ENCODE measurements at regions of chr7 and their contacts with region 1.

Region 1: GRCh38 chr7:142880876-142881505 is 4.6 kb downstream of the TRPV6 start:
- DNase-seq: peak in 1 of 2 experiments; percentile 46
- H3K4me3 ChIP-seq: no peak overlapping the region
- H3K27ac ChIP-seq: no peak overlapping the region
- H3K4me1 ChIP-seq: peaks cover 33% of the 10 kb centered on the region
- H3K27me3 ChIP-seq: no peaks in the 10 kb centered on the region
- CTCF ChIP-seq: peak; percentile 91

Region 2: GRCh38 chr7:142711746-142712619 is 169.0 kb before region 1 on chr7:
- CTCF ChIA-PET with region 1: no interaction called
- POLR2A ChIA-PET with region 1: no interaction called
- intact Hi-C with region 1: no loop called
- DNase-seq: peak in 1 of 2 experiments; percentile 54
- H3K4me3 ChIP-seq: no peak overlapping the region
- H3K27ac ChIP-seq: no peak overlapping the region
- H3K4me1 ChIP-seq: no peaks in the 10 kb centered on the region
- H3K27me3 ChIP-seq: no peaks in the 10 kb centered on the region
- CTCF ChIP-seq: peak; percentile 88

Region 3: GRCh38 chr7:142898377-142899170 is 17.6 kb after region 1 on chr7:
- CTCF ChIA-PET with region 1: interaction called, 6 read pairs
- POLR2A ChIA-PET with region 1: interaction called, 5 read pairs
- intact Hi-C with region 1: loop called (anchors 1 kb)
- DNase-seq: peak; percentile 66 to 68
- H3K4me3 ChIP-seq: no peak overlapping the region
- H3K27ac ChIP-seq: no peak overlapping the region
- H3K4me1 ChIP-seq: peaks cover 28% of the 10 kb centered on the region
- H3K27me3 ChIP-seq: no peaks in the 10 kb centered on the region
- CTCF ChIP-seq: no peak

Region 4: GRCh38 chr7:142908921-142909890 is 28.2 kb after region 1 on chr7:
- CTCF ChIA-PET with region 1: no interaction called
- POLR2A ChIA-PET with region 1: no interaction called
- intact Hi-C with region 1: no loop called
- DNase-seq: no peak
- H3K4me3 ChIP-seq: no peak overlapping the region
- H3K27ac ChIP-seq: peak overlapping the region; percentile 55
- H3K4me1 ChIP-seq: peaks cover 34% of the 10 kb centered on the region
- H3K27me3 ChIP-seq: no peaks in the 10 kb centered on the region
- CTCF ChIP-seq: peak; percentile 53; the same call in 1 of the 2 replicates

Region 5: GRCh38 chr7:142939226-142939910 is 58.4 kb after region 1 on chr7 and contains the start of gene LLCFC1:
- CTCF ChIA-PET with region 1: interaction called, 4 read pairs
- POLR2A ChIA-PET with region 1: no interaction called
- intact Hi-C with region 1: loop called (anchors 1 kb)
- DNase-seq: peak; percentile 44 to 54
- H3K4me3 ChIP-seq: no peak within 1 kb of the TSS
- H3K27ac ChIP-seq: no peak within 1 kb of the TSS
- H3K4me1 ChIP-seq: no peaks in the 10 kb centered on the region
- H3K27me3 ChIP-seq: no peaks in the 10 kb centered on the region
- CTCF ChIP-seq: peak; percentile 70
- total RNA-seq, gene LLCFC1: not detected in 2 replicates

Region 6: DNA sequence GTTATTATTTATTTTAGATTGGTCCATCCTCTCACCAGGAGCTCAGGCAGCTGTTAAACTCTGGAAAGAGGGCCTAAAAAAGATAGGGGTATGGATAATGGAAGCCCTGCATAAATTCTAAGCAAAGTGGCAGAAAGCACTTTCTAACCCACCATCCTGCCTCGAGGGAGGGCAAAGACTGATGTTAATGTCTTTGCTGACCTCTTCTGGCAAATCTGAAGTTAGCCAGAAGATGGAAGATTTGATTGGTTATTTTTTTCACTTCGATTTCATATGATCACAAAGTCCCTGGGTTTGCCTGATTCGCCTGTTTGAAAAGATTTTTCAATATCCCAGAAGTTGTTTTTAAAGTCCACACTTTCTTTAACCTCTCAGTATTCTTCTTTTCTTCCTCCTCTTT is 121.1 kb after region 1 on chr7:
- CTCF ChIA-PET with region 1: interaction called, 12 read pairs
- POLR2A ChIA-PET with region 1: no interaction called
- intact Hi-C with region 1: loop called (anchors 1 kb)
- DNase-seq: peak in 1 of 2 experiments; percentile 12
- H3K4me3 ChIP-seq: no peak overlapping the region
- H3K27ac ChIP-seq: no peak overlapping the region
- H3K4me1 ChIP-seq: peaks cover 4% of the 10 kb centered on the region; the same call in 1 of the 2 replicates
- H3K27me3 ChIP-seq: no peaks in the 10 kb centered on the region
- CTCF ChIP-seq: peak; percentile 73

Region 7: DNA sequence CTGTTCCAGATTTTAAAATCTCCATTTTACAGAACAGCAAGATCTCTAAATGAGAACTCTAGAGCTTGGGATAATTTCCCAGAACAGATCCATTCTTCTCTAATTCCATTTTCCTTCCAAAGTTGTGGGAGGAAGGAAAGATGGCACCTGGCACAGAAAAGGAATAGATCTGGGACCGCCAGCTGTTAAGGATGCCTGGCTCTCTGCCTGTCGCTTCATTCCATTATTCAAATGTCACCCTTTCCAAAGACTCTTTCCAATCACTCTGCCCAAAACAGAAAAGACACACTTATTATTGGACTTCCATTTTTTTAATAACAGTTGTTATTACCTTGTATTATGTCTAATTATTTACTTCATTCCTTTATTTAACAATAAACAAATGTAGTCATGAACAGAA is 146.7 kb after region 1 on chr7:
- CTCF ChIA-PET with region 1: no interaction called
- POLR2A ChIA-PET with region 1: no interaction called
- intact Hi-C with region 1: no loop called
- DNase-seq: no peak
- H3K4me3 ChIP-seq: no peak overlapping the region
- H3K27ac ChIP-seq: no peak overlapping the region
- H3K4me1 ChIP-seq: no peaks in the 10 kb centered on the region
- H3K27me3 ChIP-seq: peaks cover 9% of the 10 kb centered on the region; the same call in 1 of the 2 replicates
- CTCF ChIP-seq: no peak

Region 8: GRCh38 chr7:143069912-143070500 is 189.0 kb after region 1 on chr7:
- CTCF ChIA-PET with region 1: no interaction called
- POLR2A ChIA-PET with region 1: no interaction called
- intact Hi-C with region 1: no loop called
- DNase-seq: no peak
- H3K4me3 ChIP-seq: no peak overlapping the region
- H3K27ac ChIP-seq: no peak overlapping the region
- H3K4me1 ChIP-seq: no peaks in the 10 kb centered on the region
- H3K27me3 ChIP-seq: no peaks in the 10 kb centered on the region
- CTCF ChIP-seq: no peak

Measured in PC-9 (cell line).